Caco-2 (cell line): ENCODE measurements at regions of chr20 and their contacts with region 1.

Region 1: GRCh38 chr20:55961376-55962330 is 43.7 kb downstream of the CBLN4 start:
- DNase-seq: no peak
- H3K4me3 ChIP-seq: no peak overlapping the region
- H3K4me3 Mint-ChIP-seq: no peak overlapping the region
- H3K27ac Mint-ChIP-seq: no peak overlapping the region
- H3K4me1 ChIP-seq: no peaks in the 10 kb centered on the region
- H3K4me1 Mint-ChIP-seq: no peaks in the 10 kb centered on the region
- H3K27me3 ChIP-seq: no peaks in the 10 kb centered on the region
- H3K27me3 Mint-ChIP-seq: no peaks in the 10 kb centered on the region
- CTCF ChIP-seq: no peak

Region 2: GRCh38 chr20:55928266-55928665 is 33.4 kb before region 1 on chr20:
- CTCF ChIA-PET with region 1: no interaction called
- POLR2A ChIA-PET with region 1: no interaction called
- intact Hi-C with region 1: loop called (anchors 1 kb)
- DNase-seq: no peak
- H3K4me3 ChIP-seq: no peak overlapping the region
- H3K4me3 Mint-ChIP-seq: no peak overlapping the region
- H3K27ac Mint-ChIP-seq: no peak overlapping the region
- H3K4me1 ChIP-seq: no peaks in the 10 kb centered on the region
- H3K4me1 Mint-ChIP-seq: no peaks in the 10 kb centered on the region
- H3K27me3 ChIP-seq: no peaks in the 10 kb centered on the region
- H3K27me3 Mint-ChIP-seq: peaks cover 3% of the 10 kb centered on the region
- CTCF ChIP-seq: no peak